PC-3 (cell line): ENCODE measurements at regions of chr9 and their contacts with region 1.

Region 1: DNA sequence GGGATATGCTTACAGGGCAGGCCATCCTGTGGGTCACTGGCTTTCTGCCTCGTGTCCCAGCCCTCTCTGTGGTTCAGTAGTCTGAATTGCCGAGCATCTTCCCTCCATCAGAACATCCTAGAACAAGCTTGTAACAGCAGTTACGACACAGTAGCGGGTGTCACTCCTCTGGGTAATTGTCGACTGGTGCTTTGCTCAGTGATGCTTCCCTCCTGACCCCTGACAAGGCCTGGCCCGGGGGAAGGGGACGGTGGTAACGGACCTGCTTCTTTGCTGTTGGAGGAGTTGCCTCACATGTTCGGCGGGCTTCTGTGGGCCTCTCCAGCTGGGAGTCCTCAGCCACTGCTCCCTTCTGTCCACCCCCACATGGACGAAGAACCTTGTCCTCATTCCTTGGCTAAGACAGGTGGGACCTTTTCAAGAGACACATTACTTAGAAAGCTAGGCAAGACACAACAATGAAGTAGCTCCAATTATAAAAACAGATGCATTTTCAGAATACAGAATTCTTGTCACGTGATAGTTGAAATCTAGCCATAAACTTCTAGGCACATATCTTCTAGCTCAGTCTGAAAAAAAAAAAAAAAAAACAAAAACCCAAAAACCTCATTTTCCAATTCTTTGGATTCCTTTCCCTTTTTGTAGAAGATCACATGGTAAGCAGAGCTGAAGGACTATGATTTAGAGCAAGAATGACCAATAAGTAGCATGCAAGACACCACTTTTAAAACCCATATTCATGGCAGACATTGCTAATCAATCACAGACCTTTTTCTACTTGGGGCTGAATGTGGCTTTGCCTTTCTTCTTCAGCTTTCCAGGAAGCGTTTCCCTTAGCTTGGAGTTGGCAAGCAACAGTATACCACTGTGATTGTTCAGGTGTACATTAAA is 25.0 kb downstream of the HMCN2 start:
- DNase-seq: no peak
- ATAC-seq: no peak
- H3K4me3 ChIP-seq: no peak overlapping the region
- H3K27ac ChIP-seq: no peak overlapping the region
- H3K4me1 ChIP-seq: no peaks in the 10 kb centered on the region
- H3K27me3 ChIP-seq: peaks cover 42% of the 10 kb centered on the region
- CTCF ChIP-seq: no peak

Region 2: GRCh38 chr9:130246126-130246525 is 44.4 kb before region 1 on chr9:
- CTCF ChIA-PET with region 1: no interaction called
- POLR2A ChIA-PET with region 1: no interaction called
- intact Hi-C with region 1: no loop called
- DNase-seq: no peak
- ATAC-seq: no peak
- H3K4me3 ChIP-seq: no peak overlapping the region
- H3K27ac ChIP-seq: no peak overlapping the region
- H3K4me1 ChIP-seq: no peaks in the 10 kb centered on the region
- H3K27me3 ChIP-seq: no peaks in the 10 kb centered on the region
- CTCF ChIP-seq: no peak

Region 3: DNA sequence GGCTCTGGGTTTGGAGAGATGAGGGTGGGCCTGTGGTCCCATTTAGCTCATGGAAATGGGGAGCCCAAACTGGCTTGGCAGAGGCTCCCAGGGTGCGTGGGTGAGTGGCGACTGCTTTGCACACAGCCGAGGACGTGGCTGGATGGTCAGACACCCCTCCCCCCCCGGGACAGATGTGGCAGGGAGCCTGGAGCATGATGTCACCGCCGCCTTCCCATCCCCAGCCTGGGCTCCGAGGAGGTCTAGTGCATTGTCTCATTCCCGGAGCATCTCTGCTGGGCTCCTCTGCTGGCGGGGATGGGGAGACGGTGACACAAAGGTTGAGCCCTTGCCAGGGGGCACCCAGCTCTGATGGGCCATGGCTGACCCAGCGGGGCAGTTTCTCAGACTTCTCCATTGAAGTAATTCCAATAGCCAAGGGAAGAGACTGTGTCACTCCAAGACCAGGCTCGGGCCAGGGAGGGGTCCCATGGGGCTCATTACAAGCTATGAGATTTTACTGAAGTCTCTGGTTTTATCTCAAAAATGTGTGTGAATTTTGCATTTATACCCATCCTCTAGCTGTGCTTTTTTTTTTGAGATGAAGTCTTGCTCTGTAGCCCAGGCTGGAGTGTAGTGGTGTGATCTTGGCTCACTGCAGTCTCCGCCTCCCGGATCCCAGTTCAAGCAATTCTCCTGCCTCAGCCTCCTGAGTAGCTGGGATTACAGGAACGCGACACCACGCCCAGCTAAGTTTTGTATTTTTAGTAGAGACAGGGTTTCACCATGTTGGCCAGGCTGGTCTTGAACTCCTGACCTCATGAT is 11.1 kb after region 1 on chr9:
- CTCF ChIA-PET with region 1: no interaction called
- POLR2A ChIA-PET with region 1: interaction called, 14 read pairs
- intact Hi-C with region 1: no loop called
- DNase-seq: no peak
- ATAC-seq: no peak
- H3K4me3 ChIP-seq: no peak overlapping the region
- H3K27ac ChIP-seq: no peak overlapping the region
- H3K4me1 ChIP-seq: no peaks in the 10 kb centered on the region
- H3K27me3 ChIP-seq: no peaks in the 10 kb centered on the region
- CTCF ChIP-seq: no peak